Endothelial cell of umbilical vein (primary cell): ENCODE measurements at regions of chr6 and their contacts with region 1.

Region 1: GRCh38 chr6:92810913-92811312 is 608.4 kb downstream of the EPHA7 start:
- DNase-seq: peak; percentile 45
- H3K4me3 ChIP-seq: no peak overlapping the region
- H3K27ac ChIP-seq: no peak overlapping the region
- H3K4me1 ChIP-seq: no peaks in the 10 kb centered on the region
- H3K27me3 ChIP-seq: no peaks in the 10 kb centered on the region
- CTCF ChIP-seq: peak; percentile 50 to 69
- POLR2A ChIP-seq: no peak

Region 2: GRCh38 chr6:92822222-92822621 is 11.3 kb after region 1 on chr6:
- CTCF ChIA-PET with region 1: interaction called, 21 read pairs
- POLR2A ChIA-PET with region 1: no interaction called
- dilution Hi-C with region 1: no loop called
- intact Hi-C with region 1: no loop called
- DNase-seq: no peak
- H3K4me3 ChIP-seq: no peak overlapping the region
- H3K27ac ChIP-seq: no peak overlapping the region
- H3K4me1 ChIP-seq: no peaks in the 10 kb centered on the region
- H3K27me3 ChIP-seq: no peaks in the 10 kb centered on the region
- CTCF ChIP-seq: no peak
- POLR2A ChIP-seq: no peak

Region 3: DNA sequence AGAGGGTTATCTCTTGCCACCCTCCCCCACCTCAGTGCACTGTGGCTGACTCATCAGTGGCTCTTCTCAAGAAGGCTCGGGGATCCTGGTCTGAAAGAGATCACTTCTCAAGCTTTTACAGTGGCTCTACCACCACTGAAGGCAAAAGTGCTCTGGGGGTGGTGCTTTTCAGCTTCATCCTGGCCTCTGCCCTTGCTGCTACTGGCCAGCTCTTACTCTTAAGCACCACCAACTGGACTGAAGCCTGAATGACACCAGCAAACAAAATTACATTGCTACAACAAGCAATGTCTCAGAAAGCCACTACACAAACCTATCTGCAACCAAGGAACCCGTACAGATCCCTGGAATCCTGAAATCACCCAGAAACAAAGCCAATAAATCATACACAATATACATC is 206.3 kb after region 1 on chr6:
- CTCF ChIA-PET with region 1: interaction called, 35 read pairs
- POLR2A ChIA-PET with region 1: no interaction called
- dilution Hi-C with region 1: no loop called
- intact Hi-C with region 1: loop called (anchors 1 kb)
- DNase-seq: no peak
- H3K4me3 ChIP-seq: no peak overlapping the region
- H3K27ac ChIP-seq: no peak overlapping the region
- H3K4me1 ChIP-seq: no peaks in the 10 kb centered on the region
- H3K27me3 ChIP-seq: no peaks in the 10 kb centered on the region
- CTCF ChIP-seq: no peak
- POLR2A ChIP-seq: no peak